ENCODE measurements at regions of chr22 and their contacts with region 1.

Region 1: DNA sequence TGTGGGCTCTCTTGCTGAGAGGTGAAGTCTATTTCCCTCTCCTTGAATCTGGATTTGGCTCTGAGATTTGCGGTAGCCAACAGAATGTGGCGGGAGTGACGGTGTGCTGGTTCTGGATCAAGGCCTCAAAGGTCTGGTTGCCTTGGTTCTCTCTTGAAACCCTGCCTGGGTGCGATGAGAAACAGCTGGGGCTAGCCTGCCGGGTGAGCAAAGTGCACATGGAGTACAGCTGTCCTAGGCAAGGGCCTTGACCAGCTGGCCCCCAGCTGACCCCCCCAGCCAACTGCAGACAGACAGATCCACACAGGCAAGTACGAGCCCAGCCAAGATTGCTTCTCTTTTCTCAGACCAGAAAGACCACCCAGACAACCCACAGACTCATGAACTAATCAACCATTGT is 10.8 kb downstream of the SUN2 start:
- DNase-seq: no peak
- ATAC-seq: no peak
- H3K4me3 Mint-ChIP-seq: no peak overlapping the region
- H3K27ac Mint-ChIP-seq: peak overlapping the region; percentile 53; the same call in 1 of the 2 replicates
- H3K4me1 Mint-ChIP-seq: no peaks in the 10 kb centered on the region
- H3K27me3 Mint-ChIP-seq: no peaks in the 10 kb centered on the region
- CTCF ChIP-seq: no peak

Region 2: GRCh38 chr22:38649841-38650522 is 95.0 kb before region 1 on chr22:
- CTCF ChIA-PET with region 1: no interaction called
- POLR2A ChIA-PET with region 1: no interaction called
- DNase-seq: no peak
- ATAC-seq: no peak
- H3K4me3 Mint-ChIP-seq: no peak overlapping the region
- H3K27ac Mint-ChIP-seq: no peak overlapping the region
- H3K4me1 Mint-ChIP-seq: no peaks in the 10 kb centered on the region
- H3K27me3 Mint-ChIP-seq: no peaks in the 10 kb centered on the region
- CTCF ChIP-seq: no peak

Region 3: DNA sequence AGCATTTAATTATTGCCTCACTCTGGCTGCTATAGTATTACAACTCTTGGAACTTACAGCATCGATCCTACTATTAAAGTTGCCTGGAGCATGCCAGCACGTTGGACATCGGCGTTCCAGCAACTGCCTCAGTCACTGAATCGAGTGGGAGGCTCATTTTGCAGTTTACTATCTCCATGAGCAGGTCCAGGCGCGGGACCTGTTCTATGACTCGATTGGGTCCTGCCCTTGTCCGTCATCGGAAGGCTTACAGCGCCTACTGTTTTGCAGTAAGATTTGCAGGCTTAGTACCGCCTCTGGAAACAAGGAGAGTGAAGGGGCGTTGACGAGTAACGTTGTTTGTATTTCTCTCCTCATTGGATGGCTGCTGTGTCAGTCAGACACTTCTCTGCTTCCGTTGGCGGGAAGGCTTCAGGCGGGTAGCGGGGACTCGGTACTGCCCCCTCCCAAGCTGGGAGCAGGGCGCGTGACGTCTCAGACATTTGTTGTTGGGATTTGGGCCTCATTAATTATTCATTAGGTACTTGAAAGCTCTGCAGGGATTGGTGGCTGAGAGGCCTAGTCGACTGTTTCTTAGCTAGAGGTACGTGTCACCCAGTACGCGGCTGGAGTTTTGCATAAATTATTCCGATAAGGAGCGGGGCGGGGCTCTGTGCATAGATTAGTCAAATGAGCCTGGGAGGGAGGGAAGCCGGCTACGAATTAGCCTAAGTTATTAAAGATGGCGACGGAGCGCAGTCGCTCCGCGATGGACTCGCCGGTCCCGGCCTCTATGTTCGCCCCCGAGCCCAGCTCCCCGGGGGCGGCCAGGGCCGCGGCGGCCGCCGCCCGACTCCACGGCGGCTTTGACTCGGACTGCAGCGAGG is 39.5 kb before region 1 on chr22 and contains the start of gene GTPBP1:
- CTCF ChIA-PET with region 1: no interaction called
- POLR2A ChIA-PET with region 1: no interaction called
- DNase-seq: peak; percentile 97
- ATAC-seq: peak; percentile 91
- H3K4me3 Mint-ChIP-seq: peak within 1 kb of the TSS; percentile 91
- H3K27ac Mint-ChIP-seq: peak within 1 kb of the TSS; percentile 100
- H3K4me1 Mint-ChIP-seq: peaks cover 57% of the 10 kb centered on the region
- H3K27me3 Mint-ChIP-seq: no peaks in the 10 kb centered on the region; the same call in 1 of the 2 replicates
- CTCF ChIP-seq: no peak
- total RNA-seq, gene GTPBP1: 98.9 to 108 TPM (median 101 TPM) in 3 replicates

Region 4: DNA sequence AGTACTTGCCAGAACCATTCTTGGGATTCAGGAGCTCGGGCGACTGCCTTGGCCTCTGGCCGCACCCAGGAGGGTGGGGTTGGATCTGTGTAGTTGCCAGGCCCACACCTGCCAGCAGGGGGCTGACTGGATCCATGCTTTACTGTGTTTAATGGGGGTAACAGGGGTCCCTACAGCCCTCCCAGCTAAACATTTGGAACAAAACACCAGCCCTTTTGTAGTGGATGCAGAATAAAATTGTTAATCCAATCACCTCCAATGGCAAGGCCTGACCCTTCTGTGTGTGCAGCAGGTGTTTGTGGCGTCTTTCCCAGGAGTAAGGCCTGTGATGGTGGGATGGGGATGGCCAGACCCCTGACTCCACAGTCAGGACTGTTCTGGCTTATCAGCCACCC is 11.7 kb before region 1 on chr22:
- CTCF ChIA-PET with region 1: interaction called, 11 read pairs
- POLR2A ChIA-PET with region 1: interaction called, 5 read pairs
- DNase-seq: peak; percentile 72
- ATAC-seq: peak; percentile 77
- H3K4me3 Mint-ChIP-seq: no peak overlapping the region
- H3K27ac Mint-ChIP-seq: peak overlapping the region; percentile 65; the same call in 1 of the 2 replicates
- H3K4me1 Mint-ChIP-seq: 0 out of 2 replicates have a peak, but pooled peaks cover 3% of the 10 kb centered on the region
- H3K27me3 Mint-ChIP-seq: no peaks in the 10 kb centered on the region
- CTCF ChIP-seq: peak; percentile 76